IMR-90 (cell line): ENCODE measurements at regions of chr11 and their contacts with region 1.

Region 1: GRCh38 chr11:86523738-86524619 is 148.4 kb downstream of the ME3 start:
- DNase-seq: peak; percentile 99
- ATAC-seq: peak; percentile 89
- H3K4me3 ChIP-seq: no peak overlapping the region
- H3K27ac ChIP-seq: no peak overlapping the region; the same call in 1 of the 2 replicates
- H3K4me1 ChIP-seq: peaks cover 17% of the 10 kb centered on the region
- H3K27me3 ChIP-seq: no peaks in the 10 kb centered on the region
- CTCF ChIP-seq: no peak
- POLR2A ChIP-seq: no peak
- RAD21 ChIP-seq: no peak

Region 2: DNA sequence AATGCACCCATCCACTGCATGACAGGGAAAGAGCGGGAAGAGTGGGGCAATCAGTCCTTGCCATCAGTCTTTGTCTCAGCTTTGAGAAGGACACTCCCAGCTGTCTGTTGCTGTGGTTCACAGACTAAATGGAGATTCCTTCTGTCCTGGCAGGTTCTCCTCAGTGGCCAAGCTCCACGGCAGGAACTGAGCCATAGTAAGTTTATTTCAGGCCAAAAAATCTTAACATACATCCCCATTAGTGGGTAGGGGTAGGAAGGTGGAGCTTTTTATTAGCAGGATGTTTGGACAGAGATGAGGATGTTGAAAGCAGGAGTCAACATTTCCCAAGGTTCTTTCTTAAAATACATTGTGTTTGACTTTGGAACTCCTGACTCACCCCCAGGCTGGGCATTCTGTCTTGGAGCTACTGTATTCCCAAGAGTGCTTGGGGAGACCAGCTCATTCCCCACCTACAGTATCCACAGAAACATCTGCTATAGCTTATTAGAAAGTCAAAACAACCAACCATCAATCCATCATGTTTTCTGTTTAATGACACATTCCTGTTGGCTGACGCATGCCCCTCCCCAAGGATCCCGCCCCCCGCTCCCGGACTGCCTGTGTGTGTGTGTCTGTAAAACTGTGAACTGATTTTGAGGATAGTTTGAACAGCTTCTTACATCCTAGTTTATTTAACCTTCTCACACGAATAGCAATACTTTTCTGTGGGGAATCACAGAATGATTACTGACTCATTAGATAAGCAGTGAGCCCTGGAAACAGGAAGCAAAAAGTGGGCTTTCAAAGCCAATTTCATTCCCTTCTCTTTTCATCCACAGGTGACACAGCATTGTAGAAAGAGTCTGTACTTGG is 39.8 kb before region 1 on chr11:
- CTCF ChIA-PET with region 1: no interaction called
- POLR2A ChIA-PET with region 1: interaction called, 4 read pairs
- dilution Hi-C with region 1: no loop called
- in situ Hi-C with region 1: no loop called
- intact Hi-C with region 1: loop called (anchors 1 kb)
- DNase-seq: peak; percentile 100
- ATAC-seq: peak; percentile 96
- H3K4me3 ChIP-seq: no peak overlapping the region
- H3K27ac ChIP-seq: peak overlapping the region; percentile 12
- H3K4me1 ChIP-seq: peaks cover 15% of the 10 kb centered on the region
- H3K27me3 ChIP-seq: no peaks in the 10 kb centered on the region
- CTCF ChIP-seq: no peak
- POLR2A ChIP-seq: no peak
- RAD21 ChIP-seq: no peak; the same call in none of the 2 replicates

Region 3: DNA sequence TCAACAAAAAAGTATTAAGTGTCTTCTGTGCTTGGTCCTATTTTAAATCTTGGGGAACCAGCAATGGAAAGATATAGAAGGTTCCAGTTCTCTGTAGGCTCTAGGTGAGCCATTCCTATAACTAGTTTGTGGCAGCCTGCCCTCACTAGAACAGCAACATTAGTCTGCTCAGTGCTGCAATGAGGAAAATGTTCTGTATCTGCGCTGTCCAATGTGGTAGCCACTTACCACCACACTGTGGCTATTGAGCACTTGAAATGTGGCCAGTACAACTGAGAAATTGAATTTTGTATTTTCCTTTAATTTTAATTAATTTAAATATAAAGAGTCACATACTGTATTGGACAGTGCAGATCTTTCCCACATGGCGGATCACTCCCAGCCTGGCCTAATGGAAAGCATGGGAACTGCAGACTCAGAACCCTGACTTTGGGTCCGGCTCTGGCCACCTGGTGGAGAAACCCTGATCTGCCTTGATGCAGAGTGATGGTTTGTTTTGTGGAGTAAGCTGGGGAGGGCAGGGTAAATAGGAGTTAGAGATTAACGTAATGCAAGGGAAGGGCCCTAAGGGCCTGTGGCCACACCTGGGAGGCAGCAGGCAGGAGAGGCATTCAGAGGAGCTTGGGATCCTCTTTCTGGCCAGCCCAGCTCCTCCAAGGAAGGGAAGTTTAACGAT is 47.4 kb after region 1 on chr11:
- CTCF ChIA-PET with region 1: no interaction called
- POLR2A ChIA-PET with region 1: no interaction called
- dilution Hi-C with region 1: no loop called
- in situ Hi-C with region 1: no loop called
- intact Hi-C with region 1: loop called (anchors 5 kb)
- DNase-seq: no peak
- ATAC-seq: peak; percentile 37; the same call in 1 of the 2 replicates
- H3K4me3 ChIP-seq: no peak overlapping the region
- H3K27ac ChIP-seq: no peak overlapping the region
- H3K4me1 ChIP-seq: peaks cover 4% of the 10 kb centered on the region; the same call in 1 of the 2 replicates
- H3K27me3 ChIP-seq: no peaks in the 10 kb centered on the region
- CTCF ChIP-seq: peak; percentile 24; the same call in 1 of the 2 replicates
- POLR2A ChIP-seq: no peak
- RAD21 ChIP-seq: no peak; the same call in 1 of the 2 replicates